ENCODE measurements at regions of chr22 and their contacts with region 1.

Region 1: DNA sequence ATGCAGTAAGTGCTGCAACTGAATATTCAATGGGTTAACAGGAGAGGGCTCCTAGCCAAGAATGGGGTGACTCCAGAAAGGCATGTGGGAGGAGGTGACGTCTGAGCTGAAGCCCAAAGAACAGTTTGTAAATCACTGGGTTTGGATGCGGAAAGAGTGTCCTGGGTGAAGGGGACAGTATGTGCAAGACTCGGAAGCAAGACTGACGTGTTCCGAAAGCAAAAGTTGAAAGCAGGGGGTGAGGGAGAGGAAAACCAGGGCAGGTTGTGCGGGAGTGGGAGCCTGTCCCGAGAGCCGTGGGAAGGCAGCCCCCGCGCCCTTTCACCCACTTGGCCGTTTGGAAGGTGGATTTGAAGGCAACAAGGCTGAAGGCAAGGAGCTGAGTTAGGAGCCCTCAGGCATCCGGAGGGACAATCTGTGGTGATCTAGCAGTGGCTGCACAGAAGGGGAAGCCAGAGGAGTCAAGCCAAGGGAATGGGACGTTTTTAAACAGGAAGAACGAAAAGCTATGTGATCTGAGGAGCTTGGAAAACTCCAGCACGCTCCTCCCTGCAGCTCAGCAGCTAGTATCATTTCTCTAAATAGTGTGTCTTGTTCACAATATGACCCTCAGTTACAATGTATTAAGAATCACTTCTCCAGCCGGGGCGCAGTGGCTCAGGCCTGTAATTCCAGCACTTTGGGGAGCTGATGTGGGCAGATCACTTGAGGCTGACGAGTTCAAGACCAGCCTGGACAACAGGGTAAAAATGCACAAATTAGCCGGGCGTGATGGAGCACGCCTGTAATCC is 7.7 kb downstream of the SLC25A18 start:
- DNase-seq: peak; percentile 3
- H3K27ac ChIP-seq: peak overlapping the region; percentile 66
- CTCF ChIP-seq: no peak

Region 2: DNA sequence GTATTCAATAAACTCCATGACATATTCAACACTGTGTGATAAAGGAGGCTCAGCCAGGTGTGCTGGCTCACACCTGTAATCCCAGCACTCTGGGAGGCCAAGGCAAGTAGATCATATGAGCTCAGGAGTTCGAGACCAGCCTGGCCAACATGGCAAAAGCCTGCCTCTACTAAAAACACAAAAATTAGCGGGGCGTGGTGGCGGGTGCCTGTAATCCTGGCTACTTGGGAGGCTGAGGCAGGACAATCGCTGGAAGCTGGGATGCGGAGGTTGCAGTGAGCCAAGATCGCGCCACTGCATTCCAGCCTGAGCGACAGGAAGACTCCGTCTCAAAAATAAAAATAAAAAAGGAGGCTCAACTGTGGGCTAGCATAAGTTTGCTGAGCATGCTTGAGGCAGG is 11.9 kb before region 1 on chr22:
- CTCF ChIA-PET with region 1: interaction called, 10 read pairs
- POLR2A ChIA-PET with region 1: no interaction called
- DNase-seq: no peak
- H3K27ac ChIP-seq: no peak overlapping the region
- CTCF ChIP-seq: no peak

Measured in RWPE1 (cell line).